Prostate gland (tissue), 2 donors: ENCODE measurements at regions of chr9 and their contacts with region 1.

Region 1: GRCh38 chr9:89428901-89429890 is 68.7 kb downstream of the SEMA4D start:
- DNase-seq: no peak
- H3K4me3 ChIP-seq: no peak overlapping the region
- H3K27ac ChIP-seq: no peak overlapping the region
- H3K4me1 ChIP-seq: no peaks in the 10 kb centered on the region
- H3K27me3 ChIP-seq: no peaks in the 10 kb centered on the region
- CTCF ChIP-seq: peak in 1 of 4 experiments; percentile 19
- POLR2A ChIP-seq: no peak

Region 2: GRCh38 chr9:89046832-89047231 is 382.4 kb before region 1 on chr9:
- intact Hi-C with region 1: no loop called
- DNase-seq: no peak
- H3K4me3 ChIP-seq: no peak overlapping the region
- H3K27ac ChIP-seq: no peak overlapping the region
- H3K4me1 ChIP-seq: no peaks in the 10 kb centered on the region
- H3K27me3 ChIP-seq: no peaks in the 10 kb centered on the region
- CTCF ChIP-seq: no peak
- POLR2A ChIP-seq: no peak

Region 3: GRCh38 chr9:89388084-89388867 is 40.9 kb before region 1 on chr9:
- intact Hi-C with region 1: no loop called
- DNase-seq: peak; percentile 33
- H3K4me3 ChIP-seq: no peak overlapping the region
- H3K27ac ChIP-seq: peak overlapping the region; percentile 3 to 36
- H3K4me1 ChIP-seq: no peaks in the 10 kb centered on the region
- H3K27me3 ChIP-seq: no peaks in the 10 kb centered on the region
- CTCF ChIP-seq: no peak
- POLR2A ChIP-seq: no peak

Region 4: GRCh38 chr9:89536145-89536574 is 107.0 kb after region 1 on chr9:
- intact Hi-C with region 1: loop called (anchors 10 kb)
- DNase-seq: no peak
- H3K4me3 ChIP-seq: no peak overlapping the region
- H3K27ac ChIP-seq: no peak overlapping the region
- H3K4me1 ChIP-seq: no peaks in the 10 kb centered on the region
- H3K27me3 ChIP-seq: no peaks in the 10 kb centered on the region
- CTCF ChIP-seq: no peak
- POLR2A ChIP-seq: no peak